Mammary epithelial cell (primary cell): ENCODE measurements at regions of chr6 and their contacts with region 1.

Region 1: DNA sequence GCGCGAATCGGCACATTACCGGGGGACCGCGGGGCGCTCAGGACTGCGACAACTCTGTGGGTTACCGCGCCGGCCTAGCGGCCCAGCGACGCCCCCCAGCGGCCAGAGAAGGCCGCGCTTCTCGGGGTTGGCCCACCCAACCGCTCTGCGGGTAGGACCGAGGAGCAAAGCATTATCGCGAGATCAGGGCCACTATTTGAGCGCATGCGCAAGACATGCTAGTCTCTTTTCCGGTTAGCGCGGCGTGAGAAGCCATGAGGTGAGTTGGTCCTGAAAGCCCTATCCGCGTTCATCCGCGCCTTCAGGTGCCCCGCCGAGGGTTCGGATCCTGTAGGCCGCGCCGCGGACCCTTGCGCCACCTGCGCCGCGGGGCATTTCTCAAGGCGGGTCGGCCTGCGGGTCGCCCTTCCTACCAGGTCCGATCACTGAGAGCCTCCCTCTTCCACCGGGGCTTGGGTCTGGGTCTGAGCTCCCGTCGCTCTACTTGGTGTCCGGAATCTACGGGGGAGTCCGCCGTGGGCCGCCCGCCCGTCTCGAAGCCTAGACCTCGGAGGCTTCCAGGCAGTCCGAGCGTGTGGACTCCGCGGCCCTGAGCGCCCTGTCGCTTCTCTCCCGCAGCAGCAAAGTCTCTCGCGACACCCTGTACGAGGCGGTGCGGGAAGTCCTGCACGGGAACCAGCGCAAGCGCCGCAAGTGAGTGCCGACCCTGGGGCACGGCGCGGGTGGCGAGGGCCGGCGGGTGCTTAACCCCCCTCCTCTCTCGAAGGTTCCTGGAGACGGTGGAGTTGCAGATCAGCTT is at the start of gene RPL10A:
- DNase-seq: peak; percentile 93
- H3K4me3 ChIP-seq: peak within 1 kb of the TSS; percentile 87 to 98 (median 95)
- H3K27ac ChIP-seq: peak within 1 kb of the TSS; percentile 81
- H3K4me1 ChIP-seq: peaks cover 19% of the 10 kb centered on the region
- H3K27me3 ChIP-seq: no peaks in the 10 kb centered on the region
- CTCF ChIP-seq: peak; percentile 88 to 98
- total RNA-seq, gene RPL10A: 961 to 1,334 TPM

Region 2: GRCh38 chr6:35259194-35259947 is 209.0 kb before region 1 on chr6 and contains the start of gene ZNF76:
- CTCF ChIA-PET with region 1: no interaction called
- dilution Hi-C with region 1: no loop called
- in situ Hi-C with region 1: no loop called
- intact Hi-C with region 1: no loop called
- DNase-seq: peak; percentile 98
- H3K4me3 ChIP-seq: peak within 1 kb of the TSS; percentile 63 to 90 (median 90)
- H3K27ac ChIP-seq: peak within 1 kb of the TSS; percentile 97
- H3K4me1 ChIP-seq: peaks cover 13% of the 10 kb centered on the region
- H3K27me3 ChIP-seq: no peaks in the 10 kb centered on the region
- CTCF ChIP-seq: no peak
- total RNA-seq, gene ZNF76: 18.8 to 21.9 TPM

Region 3: GRCh38 chr6:35391240-35391968 is 77.0 kb before region 1 on chr6:
- CTCF ChIA-PET with region 1: no interaction called
- dilution Hi-C with region 1: no loop called
- in situ Hi-C with region 1: no loop called
- intact Hi-C with region 1: loop called (anchors 5 kb)
- DNase-seq: peak; percentile 97
- H3K4me3 ChIP-seq: no peak overlapping the region
- H3K27ac ChIP-seq: peak overlapping the region; percentile 96
- H3K4me1 ChIP-seq: peaks cover 51% of the 10 kb centered on the region
- H3K27me3 ChIP-seq: no peaks in the 10 kb centered on the region
- CTCF ChIP-seq: peak; percentile 4 to 50

Region 4: GRCh38 chr6:35485402-35485877 is 17.1 kb after region 1 on chr6:
- CTCF ChIA-PET with region 1: interaction called, 7 read pairs
- dilution Hi-C with region 1: no loop called
- in situ Hi-C with region 1: no loop called
- intact Hi-C with region 1: loop called (anchors 1 kb)
- DNase-seq: peak; percentile 74
- H3K4me3 ChIP-seq: peak overlapping the region; percentile 9 to 33 (median 21)
- H3K27ac ChIP-seq: peak overlapping the region; percentile 98
- H3K4me1 ChIP-seq: peaks cover 57% of the 10 kb centered on the region
- H3K27me3 ChIP-seq: no peaks in the 10 kb centered on the region
- CTCF ChIP-seq: no peak

Region 5: GRCh38 chr6:35505999-35506412 is 37.6 kb after region 1 on chr6:
- CTCF ChIA-PET with region 1: no interaction called
- dilution Hi-C with region 1: loop called (anchors 5 kb)
- in situ Hi-C with region 1: no loop called
- intact Hi-C with region 1: no loop called
- DNase-seq: no peak
- H3K4me3 ChIP-seq: no peak overlapping the region
- H3K27ac ChIP-seq: no peak overlapping the region
- H3K4me1 ChIP-seq: peaks cover 5% of the 10 kb centered on the region
- H3K27me3 ChIP-seq: no peaks in the 10 kb centered on the region
- CTCF ChIP-seq: no peak